Esophagus muscularis mucosa (tissue), 4 donors: ENCODE measurements at regions of chr6 and their contacts with region 1.

Region 1: DNA sequence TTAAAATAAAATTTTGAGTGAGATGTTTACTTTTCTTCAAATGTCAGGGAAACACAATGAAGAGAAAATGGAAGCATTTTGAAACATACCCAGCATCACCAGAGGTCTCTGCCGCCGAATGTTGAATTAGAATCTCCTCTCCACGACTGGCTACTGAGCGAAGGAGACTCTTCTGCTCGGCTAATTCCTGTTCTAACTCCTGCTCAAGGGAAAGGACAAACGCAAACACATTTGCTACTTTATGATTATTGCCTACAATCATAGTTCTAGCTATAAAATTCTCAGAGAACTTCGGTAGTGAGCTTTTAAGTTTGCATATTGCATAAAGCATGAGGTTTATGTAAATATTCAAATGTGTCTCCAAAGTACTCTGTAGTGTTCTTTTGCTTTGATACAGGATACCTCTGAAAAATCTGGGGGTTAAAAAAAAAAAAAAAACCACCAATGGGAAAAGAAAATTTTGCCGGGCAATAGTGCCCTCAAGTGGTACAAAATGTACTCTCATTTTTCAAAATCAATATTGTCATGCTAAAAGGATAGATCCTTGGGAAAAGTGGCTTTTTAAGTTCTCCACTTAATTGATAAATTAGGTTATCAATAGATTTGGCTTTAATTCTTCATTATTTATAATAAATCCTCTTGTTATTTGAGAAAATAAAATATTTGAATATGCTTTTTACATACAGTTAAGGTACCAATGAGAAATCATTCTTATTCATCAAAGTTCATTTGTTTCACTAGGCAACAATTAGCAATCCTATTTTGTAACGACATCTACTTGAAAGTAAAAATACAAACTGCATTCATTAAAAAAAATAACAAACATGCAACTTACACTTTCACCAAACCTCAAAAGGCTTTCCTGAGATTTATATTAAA is 369.0 kb downstream of the SYNE1 start:
- DNase-seq: no peak
- H3K4me3 ChIP-seq: no peak overlapping the region
- H3K27ac ChIP-seq: peak overlapping the region; percentile 28 to 83 (median 80)
- H3K4me1 ChIP-seq: peaks cover 46 to 76% (median 75%) of the 10 kb centered on the region in 4 donors
- H3K27me3 ChIP-seq: no peaks in the 10 kb centered on the region
- CTCF ChIP-seq: peak; percentile 48 to 57 (median 52)
- EP300 ChIP-seq: no peak
- POLR2A ChIP-seq: no peak

Region 2: DNA sequence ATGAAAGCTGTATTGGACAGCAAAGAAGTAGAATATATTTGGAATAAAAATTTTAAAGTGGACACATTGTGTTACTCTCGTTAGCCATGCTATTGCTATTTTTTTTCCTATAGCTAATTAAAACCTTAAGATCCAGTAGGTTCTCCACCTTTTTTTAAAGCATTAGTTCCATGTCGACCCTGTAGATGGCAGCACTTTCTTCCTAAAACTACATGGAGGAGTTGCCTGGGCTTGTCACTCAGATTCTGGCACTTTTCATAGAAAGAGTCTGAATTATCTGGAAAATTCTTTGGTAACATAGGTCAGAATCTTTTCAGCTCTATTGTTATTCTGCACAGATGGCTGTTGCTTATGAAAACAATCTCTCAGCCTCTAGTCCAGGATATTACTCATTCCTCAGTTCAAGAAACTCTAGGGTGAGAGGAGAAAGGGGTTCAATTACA is 502.7 kb before region 1 on chr6:
- intact Hi-C with region 1: loop called (anchors 10 kb)
- DNase-seq: no peak
- H3K4me3 ChIP-seq: no peak overlapping the region
- H3K27ac ChIP-seq: no peak overlapping the region
- H3K4me1 ChIP-seq: peaks cover 0 to 8% (median 3%) of the 10 kb centered on the region in 4 donors
- H3K27me3 ChIP-seq: peaks cover 0 to 3% (median 1%) of the 10 kb centered on the region in 4 donors
- CTCF ChIP-seq: peak; percentile 52 to 77 (median 57)
- EP300 ChIP-seq: no peak
- POLR2A ChIP-seq: no peak

Region 3: GRCh38 chr6:152146385-152146784 is 121.8 kb before region 1 on chr6:
- intact Hi-C with region 1: loop called (anchors 10 kb)
- DNase-seq: no peak
- H3K4me3 ChIP-seq: no peak overlapping the region
- H3K27ac ChIP-seq: no peak overlapping the region
- H3K4me1 ChIP-seq: peaks cover 0 to 7% (median 3%) of the 10 kb centered on the region in 4 donors
- H3K27me3 ChIP-seq: no peaks in the 10 kb centered on the region
- CTCF ChIP-seq: no peak
- EP300 ChIP-seq: no peak
- POLR2A ChIP-seq: no peak

Region 4: DNA sequence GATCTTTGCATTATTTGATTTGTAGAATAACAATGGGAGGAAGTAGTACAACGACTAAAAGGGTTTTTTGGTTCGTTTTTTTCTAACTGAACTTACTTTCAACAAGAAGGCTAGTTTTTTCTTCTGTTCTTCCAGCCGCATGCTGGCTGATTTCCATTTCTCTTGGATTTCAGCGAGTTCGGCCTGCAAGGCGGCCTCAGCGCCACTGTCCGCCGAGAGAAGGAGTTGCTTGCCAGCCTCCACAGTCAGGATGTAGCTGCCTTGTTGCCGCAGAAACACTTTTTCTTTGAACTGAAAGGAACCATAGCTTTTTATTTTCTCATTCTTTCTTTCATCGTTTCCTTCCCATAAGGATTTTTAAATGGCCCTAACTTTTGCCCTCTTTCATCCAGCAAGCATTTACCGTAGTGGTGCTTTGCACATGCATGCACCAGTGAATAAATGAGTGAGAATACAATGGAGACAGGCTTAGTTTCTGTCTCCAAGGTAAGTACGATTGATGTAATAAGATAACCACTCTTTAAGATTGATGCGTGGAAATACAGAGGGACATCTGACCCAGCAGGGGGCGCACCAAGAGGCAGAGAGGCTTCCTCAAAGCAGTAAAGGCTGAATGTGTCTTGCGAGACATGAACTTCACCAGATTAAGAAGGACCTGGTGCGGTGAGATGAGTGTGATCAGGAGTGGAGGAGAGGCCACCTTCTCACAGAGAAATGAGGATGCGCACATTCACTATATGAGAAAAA is 62.0 kb before region 1 on chr6:
- intact Hi-C with region 1: loop called (anchors 5 kb)
- DNase-seq: no peak
- H3K4me3 ChIP-seq: no peak overlapping the region
- H3K27ac ChIP-seq: no peak overlapping the region
- H3K4me1 ChIP-seq: peaks cover 0 to 11% (median 6%) of the 10 kb centered on the region in 4 donors
- H3K27me3 ChIP-seq: no peaks in the 10 kb centered on the region
- CTCF ChIP-seq: peak; percentile 33 to 63 (median 45)
- EP300 ChIP-seq: no peak
- POLR2A ChIP-seq: no peak

Region 5: GRCh38 chr6:152441902-152442301 is 173.7 kb after region 1 on chr6:
- intact Hi-C with region 1: no loop called
- DNase-seq: no peak
- H3K4me3 ChIP-seq: no peak overlapping the region
- H3K27ac ChIP-seq: no peak overlapping the region
- H3K4me1 ChIP-seq: no peaks in the 10 kb centered on the region
- H3K27me3 ChIP-seq: no peaks in the 10 kb centered on the region
- CTCF ChIP-seq: no peak
- EP300 ChIP-seq: no peak
- POLR2A ChIP-seq: no peak